Activated CD4-positive, alpha-beta T cell treated with anti-CD3 and anti-CD28 coated beads for 36 hours (primary cell): ENCODE measurements at regions of chr7 and their contacts with region 1.

Region 1: GRCh38 chr7:22001345-22002004 is 55.8 kb upstream of the CDCA7L start:
- DNase-seq: peak; percentile 16
- ATAC-seq: peak; percentile 57
- H3K4me3 Mint-ChIP-seq: no peak overlapping the region
- H3K27ac Mint-ChIP-seq: no peak overlapping the region
- H3K4me1 Mint-ChIP-seq: peaks cover 2% of the 10 kb centered on the region
- H3K27me3 Mint-ChIP-seq: no peaks in the 10 kb centered on the region

Region 2: GRCh38 chr7:20778063-20778721 is 1223.3 kb before region 1 on chr7:
- CTCF ChIA-PET with region 1: interaction called, 4 read pairs
- POLR2A ChIA-PET with region 1: no interaction called
- intact Hi-C with region 1: loop called in 1 of 2 experiments (anchors 5 kb)
- DNase-seq: peak; percentile 61
- ATAC-seq: peak; percentile 68
- H3K4me3 Mint-ChIP-seq: no peak overlapping the region
- H3K27ac Mint-ChIP-seq: no peak overlapping the region
- H3K4me1 Mint-ChIP-seq: peaks cover 19% of the 10 kb centered on the region
- H3K27me3 Mint-ChIP-seq: peaks cover 68% of the 10 kb centered on the region

Region 3: DNA sequence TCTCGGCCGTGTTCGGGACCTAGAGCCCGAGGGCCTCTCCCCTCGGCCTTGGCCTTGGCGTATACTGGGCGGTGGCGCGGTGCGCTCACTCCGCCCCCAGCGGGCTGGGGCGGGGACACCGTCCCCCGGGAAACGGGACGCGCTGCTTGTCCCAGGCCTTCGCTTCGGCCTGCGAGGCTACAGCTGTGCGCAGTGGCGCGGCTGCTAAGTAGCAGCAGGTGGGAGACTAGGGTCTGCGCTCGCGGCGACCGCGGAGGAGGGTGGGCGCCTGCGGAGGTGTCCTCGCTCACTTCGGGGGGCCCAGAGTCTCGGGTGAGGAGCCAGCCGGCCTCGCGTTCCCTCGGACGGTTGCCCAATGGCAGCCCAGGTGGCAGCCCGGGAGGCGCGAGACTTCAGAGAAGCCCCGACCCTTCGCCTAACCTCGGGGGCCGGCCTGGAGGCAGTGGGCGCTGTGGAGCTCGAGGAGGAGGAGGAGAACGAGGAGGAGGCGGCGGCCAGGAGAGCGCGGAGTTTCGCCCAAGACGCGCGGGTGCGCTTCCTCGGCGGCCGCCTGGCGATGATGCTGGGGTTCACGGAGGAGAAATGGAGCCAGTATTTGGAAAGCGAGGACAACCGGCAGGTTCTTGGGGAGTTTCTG is 458.5 kb before region 1 on chr7 and contains the start of gene DNAH11:
- CTCF ChIA-PET with region 1: no interaction called
- POLR2A ChIA-PET with region 1: no interaction called
- intact Hi-C with region 1: loop called (anchors 10 kb)
- DNase-seq: peak; percentile 61
- ATAC-seq: peak; percentile 94
- H3K4me3 Mint-ChIP-seq: peak within 1 kb of the TSS; percentile 76
- H3K27ac Mint-ChIP-seq: peak within 1 kb of the TSS; percentile 39
- H3K4me1 Mint-ChIP-seq: peaks cover 6% of the 10 kb centered on the region
- H3K27me3 Mint-ChIP-seq: peaks cover 50% of the 10 kb centered on the region
- total RNA-seq, gene DNAH11: 4.2 to 4.3 TPM

Region 4: GRCh38 chr7:21767300-21767900 is 234.1 kb before region 1 on chr7:
- CTCF ChIA-PET with region 1: interaction called, 5 read pairs
- POLR2A ChIA-PET with region 1: no interaction called
- intact Hi-C with region 1: loop called in 1 of 2 experiments (anchors 1 kb)
- DNase-seq: peak; percentile 49
- ATAC-seq: peak; percentile 84
- H3K4me3 Mint-ChIP-seq: no peak overlapping the region
- H3K27ac Mint-ChIP-seq: no peak overlapping the region
- H3K4me1 Mint-ChIP-seq: peaks cover 14% of the 10 kb centered on the region
- H3K27me3 Mint-ChIP-seq: no peaks in the 10 kb centered on the region

Region 5: GRCh38 chr7:22013711-22014110 is 12.2 kb after region 1 on chr7:
- CTCF ChIA-PET with region 1: interaction called, 14 read pairs
- POLR2A ChIA-PET with region 1: no interaction called
- intact Hi-C with region 1: no loop called
- DNase-seq: no peak
- ATAC-seq: no peak
- H3K4me3 Mint-ChIP-seq: no peak overlapping the region
- H3K27ac Mint-ChIP-seq: no peak overlapping the region
- H3K4me1 Mint-ChIP-seq: no peaks in the 10 kb centered on the region
- H3K27me3 Mint-ChIP-seq: peaks cover 7% of the 10 kb centered on the region

Region 6: DNA sequence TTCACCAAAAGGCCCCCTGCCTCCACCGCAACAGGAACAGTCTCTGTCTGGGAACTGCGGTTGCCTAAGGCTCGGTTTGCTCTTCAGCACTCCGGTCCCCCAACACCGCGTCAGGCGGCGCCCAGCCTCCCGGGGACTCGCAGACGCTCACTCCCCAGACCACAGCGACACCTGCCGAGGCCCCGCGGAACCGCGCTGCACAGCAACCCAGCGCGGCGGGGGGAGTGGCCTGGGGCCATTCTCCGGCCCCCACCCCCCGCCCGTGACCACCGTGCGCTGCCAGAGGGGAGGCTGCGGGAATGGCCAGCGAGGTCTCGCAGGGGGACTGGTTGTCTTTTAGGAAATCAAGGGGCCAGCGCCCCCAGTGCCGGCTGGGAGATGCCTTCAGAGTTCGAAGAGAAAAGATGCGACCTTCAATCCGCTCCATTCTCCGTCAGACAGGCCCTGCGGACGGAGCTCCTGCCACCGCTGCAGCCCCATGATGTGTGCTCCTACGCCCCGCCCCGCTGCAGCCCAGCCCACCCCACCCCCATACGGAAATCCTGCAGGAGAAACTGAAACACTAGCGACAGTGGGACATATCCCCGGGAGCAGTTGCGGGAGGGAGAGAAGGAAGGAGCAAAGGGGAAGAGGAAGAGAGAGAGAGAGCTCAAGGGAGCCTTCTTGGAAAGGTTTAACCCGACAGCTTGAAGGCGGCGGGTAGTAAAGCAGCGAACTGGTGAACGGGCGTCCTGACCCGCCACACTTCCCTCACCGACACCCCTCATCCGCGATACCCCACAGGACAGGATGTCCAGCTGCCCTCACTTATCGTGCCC is 81.6 kb after region 1 on chr7:
- CTCF ChIA-PET with region 1: interaction called, 3 read pairs
- POLR2A ChIA-PET with region 1: no interaction called
- intact Hi-C with region 1: loop called in 1 of 2 experiments (anchors 2 kb)
- DNase-seq: peak; percentile 91
- ATAC-seq: peak; percentile 99
- H3K4me3 Mint-ChIP-seq: peak overlapping the region; percentile 71
- H3K27ac Mint-ChIP-seq: no peak overlapping the region
- H3K4me1 Mint-ChIP-seq: peaks cover 10% of the 10 kb centered on the region
- H3K27me3 Mint-ChIP-seq: peaks cover 11% of the 10 kb centered on the region